Heart right ventricle (tissue), 16 donors: ENCODE measurements at regions of chr5 and their contacts with region 1.

Region 1: DNA sequence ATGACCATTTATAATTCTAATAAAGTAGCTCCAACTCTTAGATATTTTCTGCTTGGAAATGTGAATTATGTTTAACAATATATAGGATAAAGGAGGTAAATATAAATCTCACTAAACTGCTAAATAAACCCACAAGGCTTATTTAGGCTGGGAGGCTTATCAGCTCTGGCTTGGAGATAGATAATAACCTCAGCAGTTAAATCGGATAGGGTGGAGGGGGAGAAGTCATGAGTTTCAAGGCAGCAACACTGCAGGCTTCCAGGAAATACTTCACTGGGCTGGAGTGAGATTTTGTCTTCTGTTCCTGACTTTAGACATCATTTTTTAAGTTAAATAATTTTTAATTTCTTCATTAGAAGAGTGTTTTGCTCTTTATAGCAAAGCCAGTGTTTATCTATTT is 80.0 kb upstream of the ITGA2 start:
- DNase-seq: peak in 1 of 2 donors; percentile 12
- ATAC-seq: peak in 5 of 8 donors; percentile 61 to 90 (median 72)
- H3K4me3 ChIP-seq: no peak overlapping the region
- H3K27ac ChIP-seq: peak overlapping the region in 6 of 10 donors; percentile 2 to 66 (median 44)
- H3K4me1 ChIP-seq: peaks cover 0 to 32% (median 17%) of the 10 kb centered on the region in 9 donors
- H3K27me3 ChIP-seq: no peaks in the 10 kb centered on the region
- CTCF ChIP-seq: no peak

Region 2: GRCh38 chr5:51599587-51599986 is 1309.6 kb before region 1 on chr5:
- intact Hi-C with region 1: no loop called
- DNase-seq: no peak
- ATAC-seq: no peak
- H3K4me3 ChIP-seq: no peak overlapping the region
- H3K27ac ChIP-seq: no peak overlapping the region
- H3K4me1 ChIP-seq: no peaks in the 10 kb centered on the region
- H3K27me3 ChIP-seq: no peaks in the 10 kb centered on the region
- CTCF ChIP-seq: no peak

Region 3: GRCh38 chr5:52674815-52675545 is 234.2 kb before region 1 on chr5:
- intact Hi-C with region 1: loop called in 2 of 10 experiments (anchors 10 kb)
- DNase-seq: no peak
- ATAC-seq: peak in 1 of 8 donors; percentile 52
- H3K4me3 ChIP-seq: peak overlapping the region in 1 of 10 donors; percentile 11
- H3K27ac ChIP-seq: peak overlapping the region in 8 of 10 donors; percentile 22 to 69 (median 44)
- H3K4me1 ChIP-seq: peaks cover 0 to 13% (median 0%) of the 10 kb centered on the region in 9 donors
- H3K27me3 ChIP-seq: no peaks in the 10 kb centered on the region
- CTCF ChIP-seq: no peak

Region 4: DNA sequence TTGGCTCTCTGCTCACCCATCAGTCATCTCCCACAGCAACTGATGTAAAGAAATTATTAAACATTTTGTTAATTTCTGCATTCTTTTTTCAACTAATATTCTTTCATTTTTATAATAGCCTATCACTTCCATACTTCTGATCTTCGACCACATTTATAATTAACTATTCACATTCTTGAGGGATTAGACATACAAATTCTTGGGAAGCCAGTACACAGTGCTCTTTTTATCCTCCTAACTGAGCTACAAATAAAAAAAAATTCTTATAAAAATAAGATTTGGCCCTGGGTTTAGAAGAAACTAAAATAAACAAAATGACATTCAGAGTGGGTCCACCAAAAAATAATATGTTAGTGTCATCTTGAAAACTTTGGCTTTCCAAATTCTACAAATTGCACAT is 225.1 kb before region 1 on chr5:
- intact Hi-C with region 1: loop called in 2 of 10 experiments (anchors 10 kb)
- DNase-seq: no peak
- ATAC-seq: no peak
- H3K4me3 ChIP-seq: no peak overlapping the region
- H3K27ac ChIP-seq: no peak overlapping the region
- H3K4me1 ChIP-seq: no peaks in the 10 kb centered on the region
- H3K27me3 ChIP-seq: no peaks in the 10 kb centered on the region
- CTCF ChIP-seq: no peak